Activated T-helper 2 cell treated with anti-CD3 and anti-CD28 coated beads, Interferon-gamma antibody, Interleukin-2, Interleukin-4, amounts not matched to agents 10 μg/mL and 5 μg/mL and 100 μg/mL, durations not matched to agents 14 hours and 24 hours and 36 hours (primary cell): ENCODE measurements at regions of chr19 and their contacts with region 1.

Region 1: GRCh38 chr19:48795055-48795684 is 15.7 kb downstream of the BCAT2 start:
- DNase-seq: peak; percentile 78
- H3K4me3 Mint-ChIP-seq: peak overlapping the region; percentile 86
- H3K27ac Mint-ChIP-seq: peak overlapping the region; percentile 85
- H3K4me1 Mint-ChIP-seq: peaks cover 5% of the 10 kb centered on the region
- H3K27me3 Mint-ChIP-seq: no peaks in the 10 kb centered on the region

Region 2: DNA sequence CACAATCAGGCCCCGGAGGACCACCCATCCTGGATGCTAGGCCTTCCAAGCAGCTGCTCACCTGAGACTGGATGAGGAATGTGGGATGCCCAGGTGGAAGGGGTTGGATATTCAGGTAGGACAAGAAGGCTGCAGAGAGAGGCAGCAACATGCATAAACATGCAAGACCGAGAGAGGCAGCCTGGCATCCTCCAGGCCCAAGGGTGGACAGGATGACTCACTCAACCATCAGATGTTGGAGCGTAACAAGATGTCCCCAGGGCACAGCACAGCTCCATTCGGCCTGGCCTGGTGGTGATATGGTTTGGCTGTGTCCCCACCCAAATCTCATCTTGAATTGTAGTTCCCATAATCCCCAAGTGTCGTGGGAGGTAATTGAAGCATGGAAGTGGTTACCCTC is 741.3 kb before region 1 on chr19:
- intact Hi-C with region 1: no loop called
- DNase-seq: no peak
- H3K4me3 Mint-ChIP-seq: no peak overlapping the region
- H3K27ac Mint-ChIP-seq: no peak overlapping the region
- H3K4me1 Mint-ChIP-seq: peaks cover 2% of the 10 kb centered on the region
- H3K27me3 Mint-ChIP-seq: no peaks in the 10 kb centered on the region

Region 3: DNA sequence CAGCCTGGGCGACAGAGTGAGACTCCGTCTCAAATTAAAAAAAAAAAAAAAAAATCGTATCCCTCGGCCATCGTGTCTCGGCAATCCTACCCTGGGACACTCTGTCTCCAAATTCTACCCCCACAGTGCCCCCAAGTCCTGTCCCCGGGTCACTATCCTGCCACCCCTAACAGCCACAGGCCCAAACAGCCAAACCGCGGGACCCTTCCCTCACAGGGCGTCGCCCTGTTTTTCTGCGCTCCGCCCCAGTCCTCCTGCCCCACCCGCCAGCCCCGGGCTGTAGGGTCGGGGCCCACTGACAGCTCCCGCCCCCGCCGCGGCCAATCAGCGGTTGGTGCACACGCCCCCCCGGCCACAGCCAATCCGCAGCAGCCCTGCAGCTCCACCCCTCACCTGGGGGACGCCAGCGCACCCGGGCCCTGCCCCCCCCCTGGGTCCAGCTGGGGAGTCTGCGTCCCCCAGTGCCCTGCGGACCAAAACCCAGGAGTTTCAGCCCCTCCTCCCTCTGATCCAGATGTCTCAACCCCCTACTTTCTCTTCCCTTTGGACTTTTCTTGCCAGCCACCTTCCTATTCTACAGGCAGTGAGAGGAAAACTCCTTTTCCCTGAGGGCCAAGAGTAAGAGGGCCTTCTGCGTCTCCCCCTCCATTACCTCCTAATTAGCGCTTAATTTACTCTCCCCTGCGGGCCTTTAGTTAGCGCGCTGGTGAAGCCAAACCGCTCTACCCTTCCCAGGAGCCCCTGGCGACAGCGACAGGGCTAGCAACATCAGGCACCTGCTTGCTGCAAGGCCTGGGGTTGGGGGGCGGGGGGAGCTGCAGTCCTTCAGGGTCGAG is 17.1 kb after region 1 on chr19:
- intact Hi-C with region 1: loop called (anchors 1 kb)
- DNase-seq: peak; percentile 58
- H3K4me3 Mint-ChIP-seq: peak overlapping the region; percentile 79
- H3K27ac Mint-ChIP-seq: peak overlapping the region; percentile 49
- H3K4me1 Mint-ChIP-seq: peaks cover 32% of the 10 kb centered on the region
- H3K27me3 Mint-ChIP-seq: no peaks in the 10 kb centered on the region

Region 4: GRCh38 chr19:48835734-48836088 is 40.5 kb after region 1 on chr19:
- intact Hi-C with region 1: loop called (anchors 1 kb)
- DNase-seq: peak; percentile 85
- H3K4me3 Mint-ChIP-seq: peak overlapping the region; percentile 83
- H3K27ac Mint-ChIP-seq: peak overlapping the region; percentile 76
- H3K4me1 Mint-ChIP-seq: peaks cover 15% of the 10 kb centered on the region
- H3K27me3 Mint-ChIP-seq: peaks cover 2% of the 10 kb centered on the region

Region 5: DNA sequence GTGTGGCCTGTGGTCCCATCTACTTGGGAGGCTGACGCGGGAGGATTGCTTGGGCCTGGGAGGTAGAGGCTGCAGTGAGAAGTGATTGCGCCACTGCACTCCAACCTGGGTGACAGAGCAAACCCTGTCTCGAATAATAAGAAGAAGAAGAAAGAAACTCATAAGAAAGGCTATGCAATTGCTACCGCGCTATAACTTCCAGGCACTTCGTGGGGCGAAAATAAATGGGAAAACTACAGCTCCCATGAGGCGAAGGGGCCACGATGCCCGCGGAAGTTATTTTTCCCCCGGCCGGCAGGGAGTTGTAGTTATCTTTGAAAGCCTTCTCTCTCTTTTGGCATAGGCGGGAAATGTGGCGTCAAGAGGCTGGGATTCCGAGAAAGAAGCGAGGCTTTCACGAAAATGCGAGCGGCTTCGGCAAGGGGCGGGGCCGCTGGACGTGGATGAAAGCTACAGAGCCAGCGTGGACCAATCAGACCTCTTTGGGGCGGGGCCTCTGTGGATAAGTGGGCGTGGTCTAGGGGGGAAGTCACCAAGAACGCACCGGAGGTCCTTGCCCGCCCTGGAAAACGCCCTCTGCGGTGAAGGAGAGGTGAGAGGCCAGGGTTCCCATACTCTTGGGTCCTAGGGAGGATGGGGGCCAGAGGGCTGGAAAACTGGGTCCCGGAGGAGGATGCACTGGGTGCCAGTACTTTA is 104.8 kb after region 1 on chr19 and contains the start of gene NUCB1:
- intact Hi-C with region 1: no loop called
- DNase-seq: peak; percentile 99
- H3K4me3 Mint-ChIP-seq: peak within 1 kb of the TSS; percentile 97
- H3K27ac Mint-ChIP-seq: peak within 1 kb of the TSS; percentile 97
- H3K4me1 Mint-ChIP-seq: peaks cover 18% of the 10 kb centered on the region
- H3K27me3 Mint-ChIP-seq: peaks cover 2% of the 10 kb centered on the region
- total RNA-seq, gene NUCB1: 142 and 147 TPM in 2 replicates